ENCODE measurements at regions of chr10 and their contacts with region 1.

Region 1: GRCh38 chr10:52308251-52309031 is 5.6 kb upstream of the DKK1 start:
- DNase-seq: peak; percentile 74
- H3K4me3 Mint-ChIP-seq: peak overlapping the region; percentile 70
- H3K27ac Mint-ChIP-seq: no peak overlapping the region
- H3K4me1 Mint-ChIP-seq: peaks cover 33% of the 10 kb centered on the region
- H3K27me3 Mint-ChIP-seq: no peaks in the 10 kb centered on the region
- CTCF ChIP-seq: peak; percentile 79

Region 2: DNA sequence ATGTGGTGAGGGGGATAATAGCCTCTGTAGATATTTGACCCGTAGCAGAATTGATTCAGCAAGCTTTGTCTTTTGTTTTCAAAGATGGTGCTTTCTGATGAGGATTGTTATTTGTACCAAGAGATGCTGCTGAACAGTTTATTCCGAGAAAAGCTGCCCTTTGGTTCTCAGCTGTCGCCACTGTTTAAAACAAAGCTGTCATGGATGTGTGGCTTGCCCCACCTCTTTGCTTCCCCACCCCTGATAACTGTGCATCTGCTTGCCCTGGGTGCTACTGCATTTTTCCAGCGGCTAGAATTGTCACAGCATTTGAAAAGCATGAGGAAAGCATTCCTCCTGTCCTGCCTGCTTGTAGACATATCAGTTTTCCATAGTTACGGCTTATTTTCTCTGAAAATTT is 382.1 kb before region 1 on chr10:
- CTCF ChIA-PET with region 1: no interaction called
- intact Hi-C with region 1: no loop called
- DNase-seq: no peak
- H3K4me3 Mint-ChIP-seq: no peak overlapping the region
- H3K27ac Mint-ChIP-seq: no peak overlapping the region
- H3K4me1 Mint-ChIP-seq: no peaks in the 10 kb centered on the region
- H3K27me3 Mint-ChIP-seq: no peaks in the 10 kb centered on the region
- CTCF ChIP-seq: no peak

Region 3: GRCh38 chr10:52488606-52489485 is 180.4 kb after region 1 on chr10:
- CTCF ChIA-PET with region 1: interaction called, 70 read pairs
- intact Hi-C with region 1: loop called (anchors 1 kb)
- DNase-seq: peak; percentile 24
- H3K4me3 Mint-ChIP-seq: no peak overlapping the region
- H3K27ac Mint-ChIP-seq: peak overlapping the region; percentile 85
- H3K4me1 Mint-ChIP-seq: peaks cover 49% of the 10 kb centered on the region
- H3K27me3 Mint-ChIP-seq: no peaks in the 10 kb centered on the region
- CTCF ChIP-seq: peak; percentile 48

Region 4: GRCh38 chr10:52566471-52567246 is 258.2 kb after region 1 on chr10:
- CTCF ChIA-PET with region 1: interaction called, 49 read pairs
- intact Hi-C with region 1: loop called (anchors 1 kb)
- DNase-seq: peak; percentile 45
- H3K4me3 Mint-ChIP-seq: no peak overlapping the region
- H3K27ac Mint-ChIP-seq: no peak overlapping the region
- H3K4me1 Mint-ChIP-seq: peaks cover 9% of the 10 kb centered on the region
- H3K27me3 Mint-ChIP-seq: no peaks in the 10 kb centered on the region
- CTCF ChIP-seq: peak; percentile 66

Region 5: DNA sequence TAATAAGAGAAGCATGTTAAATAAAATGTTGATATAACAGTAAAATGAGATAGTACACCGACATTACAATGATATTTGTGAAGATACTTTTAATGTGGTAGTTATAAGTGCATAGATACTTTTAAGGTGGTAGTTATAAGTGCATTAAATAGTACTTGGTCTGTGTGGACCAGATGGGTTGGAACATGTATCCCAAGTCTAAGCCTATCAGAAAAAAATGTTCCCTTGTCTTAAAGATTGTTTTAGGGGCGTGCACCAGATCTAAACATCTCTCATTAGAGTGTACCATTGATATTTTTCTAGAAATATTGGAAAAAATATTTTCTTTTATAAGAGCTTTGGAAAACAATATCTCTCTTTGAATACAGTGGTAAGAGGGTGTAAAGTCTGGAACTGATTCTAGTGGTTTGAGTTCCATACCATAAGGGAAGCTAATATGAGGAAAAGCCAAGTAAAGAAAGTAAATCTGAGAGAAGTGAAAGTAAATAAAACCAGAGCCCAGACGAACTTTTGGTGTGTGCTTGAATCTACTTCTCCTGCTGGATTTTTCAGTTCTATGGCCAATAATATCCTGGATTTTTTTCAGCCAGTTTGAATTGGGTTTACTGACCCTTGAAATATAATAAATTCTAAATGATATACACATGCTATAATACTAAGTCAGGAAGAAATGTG is 288.9 kb after region 1 on chr10:
- CTCF ChIA-PET with region 1: no interaction called
- intact Hi-C with region 1: no loop called
- DNase-seq: no peak
- H3K4me3 Mint-ChIP-seq: no peak overlapping the region
- H3K27ac Mint-ChIP-seq: no peak overlapping the region
- H3K4me1 Mint-ChIP-seq: peaks cover 18% of the 10 kb centered on the region
- H3K27me3 Mint-ChIP-seq: no peaks in the 10 kb centered on the region
- CTCF ChIP-seq: no peak

Region 6: DNA sequence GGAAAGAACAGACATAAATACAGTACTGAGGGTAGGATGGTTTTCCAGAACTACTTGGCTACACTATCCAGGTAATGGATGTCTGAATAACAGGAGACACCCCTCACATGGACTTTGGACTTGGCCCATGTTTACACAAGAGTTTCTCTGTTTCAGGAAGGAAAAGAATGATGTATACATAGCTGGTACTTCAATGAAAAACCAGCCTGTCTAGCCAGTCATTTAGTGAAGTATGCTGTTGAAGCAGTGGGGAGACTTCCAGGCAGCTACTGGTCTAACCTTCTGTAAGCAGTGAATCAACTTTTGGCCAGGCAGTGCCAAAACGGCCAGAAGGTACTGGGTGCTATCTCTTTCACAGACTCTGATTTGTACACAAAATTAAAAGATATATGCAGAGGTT is 329.2 kb after region 1 on chr10:
- CTCF ChIA-PET with region 1: no interaction called
- intact Hi-C with region 1: loop called (anchors 2 kb)
- DNase-seq: peak; percentile 59
- H3K4me3 Mint-ChIP-seq: no peak overlapping the region
- H3K27ac Mint-ChIP-seq: no peak overlapping the region
- H3K4me1 Mint-ChIP-seq: peaks cover 41% of the 10 kb centered on the region
- H3K27me3 Mint-ChIP-seq: no peaks in the 10 kb centered on the region
- CTCF ChIP-seq: no peak

Region 7: GRCh38 chr10:52729271-52730104 is 421.0 kb after region 1 on chr10:
- CTCF ChIA-PET with region 1: no interaction called
- intact Hi-C with region 1: loop called (anchors 1 kb)
- DNase-seq: no peak
- H3K4me3 Mint-ChIP-seq: no peak overlapping the region
- H3K27ac Mint-ChIP-seq: no peak overlapping the region
- H3K4me1 Mint-ChIP-seq: peaks cover 16% of the 10 kb centered on the region
- H3K27me3 Mint-ChIP-seq: no peaks in the 10 kb centered on the region
- CTCF ChIP-seq: peak; percentile 28

Region 8: GRCh38 chr10:52779541-52780390 is 471.3 kb after region 1 on chr10:
- CTCF ChIA-PET with region 1: no interaction called
- intact Hi-C with region 1: loop called (anchors 1 kb)
- DNase-seq: peak; percentile 87
- H3K4me3 Mint-ChIP-seq: no peak overlapping the region
- H3K27ac Mint-ChIP-seq: no peak overlapping the region
- H3K4me1 Mint-ChIP-seq: no peaks in the 10 kb centered on the region
- H3K27me3 Mint-ChIP-seq: peaks cover 15% of the 10 kb centered on the region
- CTCF ChIP-seq: peak; percentile 86